Colonic mucosa (tissue), 4 donors: ENCODE measurements at regions of chr1 and their contacts with region 1.

Region 1: GRCh38 chr1:157380523-157380922 is 171.8 kb downstream of the FCRL5 start:
- DNase-seq: no peak
- H3K4me3 ChIP-seq: no peak overlapping the region
- H3K27ac ChIP-seq: no peak overlapping the region
- H3K4me1 ChIP-seq: no peaks in the 10 kb centered on the region
- H3K27me3 ChIP-seq: no peaks in the 10 kb centered on the region
- CTCF ChIP-seq: no peak

Region 2: GRCh38 chr1:156910309-156910782 is 470.2 kb before region 1 on chr1:
- intact Hi-C with region 1: no loop called
- DNase-seq: peak; percentile 47
- H3K4me3 ChIP-seq: no peak overlapping the region
- H3K27ac ChIP-seq: no peak overlapping the region
- H3K4me1 ChIP-seq: peaks cover 3% of the 10 kb centered on the region
- H3K27me3 ChIP-seq: no peaks in the 10 kb centered on the region
- CTCF ChIP-seq: peak; percentile 85

Region 3: DNA sequence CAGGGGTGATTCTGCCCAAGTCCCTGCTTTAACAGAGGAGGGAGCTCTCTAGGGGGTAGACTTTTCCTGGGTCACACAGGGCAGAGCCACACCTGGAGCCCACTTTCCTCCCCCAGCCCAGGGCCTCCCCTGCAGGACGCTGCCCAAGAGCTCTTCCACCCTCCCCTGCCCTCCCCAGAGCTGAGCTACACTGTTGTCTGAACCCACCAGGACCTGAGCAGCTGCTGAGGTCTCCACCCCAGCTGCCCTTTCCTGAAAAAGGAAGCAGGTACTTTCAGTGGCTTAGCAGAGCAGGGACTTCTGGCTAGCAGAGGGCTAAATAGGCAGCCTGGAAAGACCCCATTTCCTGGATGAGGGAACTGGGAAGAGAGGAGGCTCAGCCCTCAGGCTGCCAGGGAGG is 73.0 kb before region 1 on chr1:
- intact Hi-C with region 1: no loop called
- DNase-seq: no peak
- H3K4me3 ChIP-seq: no peak overlapping the region
- H3K27ac ChIP-seq: no peak overlapping the region
- H3K4me1 ChIP-seq: no peaks in the 10 kb centered on the region
- H3K27me3 ChIP-seq: no peaks in the 10 kb centered on the region
- CTCF ChIP-seq: no peak

Region 4: GRCh38 chr1:157363660-157364140 is 16.8 kb before region 1 on chr1:
- intact Hi-C with region 1: no loop called
- DNase-seq: peak; percentile 48
- H3K4me3 ChIP-seq: no peak overlapping the region
- H3K27ac ChIP-seq: no peak overlapping the region
- H3K4me1 ChIP-seq: no peaks in the 10 kb centered on the region
- H3K27me3 ChIP-seq: no peaks in the 10 kb centered on the region
- CTCF ChIP-seq: peak; percentile 58

Region 5: GRCh38 chr1:157490467-157491165 is 110.1 kb after region 1 on chr1:
- intact Hi-C with region 1: loop called (anchors 2 kb)
- DNase-seq: peak; percentile 89
- H3K4me3 ChIP-seq: no peak overlapping the region
- H3K27ac ChIP-seq: no peak overlapping the region
- H3K4me1 ChIP-seq: no peaks in the 10 kb centered on the region
- H3K27me3 ChIP-seq: no peaks in the 10 kb centered on the region
- CTCF ChIP-seq: peak; percentile 54

Region 6: GRCh38 chr1:157505481-157506272 is 125.2 kb after region 1 on chr1:
- intact Hi-C with region 1: loop called (anchors 5 kb)
- DNase-seq: peak; percentile 69
- H3K4me3 ChIP-seq: no peak overlapping the region
- H3K27ac ChIP-seq: no peak overlapping the region
- H3K4me1 ChIP-seq: no peaks in the 10 kb centered on the region
- H3K27me3 ChIP-seq: no peaks in the 10 kb centered on the region
- CTCF ChIP-seq: peak; percentile 76